Lower leg skin (tissue), 4 donors: ENCODE measurements at regions of chr6 and their contacts with region 1.

Region 1: GRCh38 chr6:111423960-111424846 is 58.8 kb downstream of the REV3L start:
- DNase-seq: no peak
- H3K4me3 ChIP-seq: no peak overlapping the region
- CTCF ChIP-seq: no peak
- POLR2A ChIP-seq: no peak

Region 2: GRCh38 chr6:110560239-110561007 is 863.8 kb before region 1 on chr6:
- intact Hi-C with region 1: loop called (anchors 5 kb)
- DNase-seq: no peak
- H3K4me3 ChIP-seq: no peak overlapping the region
- CTCF ChIP-seq: no peak
- POLR2A ChIP-seq: no peak

Region 3: DNA sequence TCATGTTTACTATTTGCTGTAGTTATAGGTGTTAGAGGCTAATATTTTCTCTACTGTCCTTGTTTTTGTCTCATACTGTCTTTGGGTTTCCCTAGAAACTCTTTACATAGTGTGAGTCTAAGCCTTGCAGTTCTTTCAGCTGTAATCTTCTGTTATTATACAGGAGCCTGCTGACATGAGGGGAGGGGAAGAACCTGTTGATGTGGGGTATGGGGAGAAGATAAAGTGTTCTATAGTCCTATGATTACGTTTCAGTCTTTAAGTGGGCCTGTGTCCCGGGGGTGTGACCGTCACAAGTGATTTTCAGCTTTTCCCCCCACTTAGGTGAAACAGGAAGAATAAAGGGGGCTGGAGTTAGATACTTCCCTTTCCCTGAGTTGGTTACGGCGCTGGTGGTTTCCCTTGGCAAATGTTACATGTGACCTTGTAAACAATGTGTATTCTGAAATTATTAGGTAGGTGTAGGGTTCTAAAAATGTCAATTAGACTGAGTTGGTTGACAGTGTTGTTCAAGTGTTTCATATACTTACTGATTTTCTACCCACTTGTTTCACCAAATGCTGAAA is 17.6 kb after region 1 on chr6:
- intact Hi-C with region 1: no loop called
- DNase-seq: no peak
- H3K4me3 ChIP-seq: no peak overlapping the region
- CTCF ChIP-seq: no peak
- POLR2A ChIP-seq: no peak

Region 4: GRCh38 chr6:111462770-111463391 is 38.7 kb after region 1 on chr6:
- intact Hi-C with region 1: no loop called
- DNase-seq: no peak
- H3K4me3 ChIP-seq: no peak overlapping the region
- CTCF ChIP-seq: no peak
- POLR2A ChIP-seq: no peak